Dorsolateral prefrontal cortex (tissue), 120 donors: ENCODE measurements at regions of chr4 and their contacts with region 1.

Region 1: DNA sequence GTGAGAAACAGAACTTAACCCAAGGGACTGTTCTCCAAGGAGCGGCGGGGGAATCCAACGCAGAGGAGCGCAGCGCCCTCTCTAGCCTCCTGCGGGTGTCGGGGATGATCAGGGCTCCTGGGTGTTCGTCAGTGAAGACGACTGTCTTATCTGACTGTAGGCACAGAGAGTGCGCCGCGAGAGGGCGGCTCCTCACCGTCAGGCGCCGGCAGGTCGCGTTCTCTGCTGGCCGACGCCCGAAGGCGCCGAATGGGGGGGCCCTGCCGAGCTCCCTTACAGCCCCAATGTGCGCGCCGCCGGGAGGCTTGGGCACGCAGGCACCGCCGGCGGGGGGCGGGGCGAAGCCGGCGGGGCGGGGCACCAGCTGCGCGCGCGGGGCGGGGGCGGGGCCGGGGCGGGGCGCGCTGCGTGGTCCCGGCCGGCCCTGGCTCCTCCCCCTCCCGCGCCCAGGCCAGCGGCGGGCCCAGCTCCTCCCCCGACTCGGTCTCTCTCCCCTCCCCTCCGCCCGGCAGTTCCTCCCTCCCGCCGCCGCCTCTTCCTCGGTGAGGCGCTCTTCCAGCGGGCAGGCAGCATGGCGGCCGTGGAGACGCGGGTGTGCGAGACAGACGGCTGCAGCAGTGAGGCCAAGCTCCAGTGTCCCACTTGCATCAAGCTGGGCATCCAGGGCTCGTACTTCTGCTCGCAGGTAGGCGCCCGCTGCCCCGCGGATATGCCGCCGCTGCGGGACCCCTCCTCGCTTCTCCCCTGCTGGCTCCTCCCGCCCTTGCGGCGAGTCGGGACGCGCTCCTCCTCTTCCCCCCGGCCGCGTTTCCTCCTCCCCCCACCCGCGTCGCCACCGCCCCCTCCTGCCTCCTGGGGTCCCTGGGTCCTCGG is at the start of gene METAP1:
- DNase-seq: peak; percentile 74 to 93 (median 89)
- H3K4me3 ChIP-seq: peak within 1 kb of the TSS; percentile 64 to 99 (median 95)
- H3K27ac ChIP-seq: peak within 1 kb of the TSS; percentile 54 to 95 (median 89)
- H3K27me3 ChIP-seq: no peaks in the 10 kb centered on the region
- CTCF ChIP-seq: peak; percentile 36 to 86 (median 69)
- total RNA-seq, gene METAP1: 18.4 to 48.4 (median 31.7) TPM

Region 2: GRCh38 chr4:98260579-98261290 is 734.7 kb before region 1 on chr4:
- intact Hi-C with region 1: loop called (anchors 2 to 5 kb)
- DNase-seq: peak; percentile 84 to 96 (median 92)
- H3K4me3 ChIP-seq: peak overlapping the region; percentile 67 to 96 (median 88)
- H3K27ac ChIP-seq: peak overlapping the region; percentile 89 to 99 (median 98)
- H3K27me3 ChIP-seq: no peaks in the 10 kb centered on the region
- CTCF ChIP-seq: peak in 12 of 56 donors; percentile 1 to 19 (median 10)

Region 3: GRCh38 chr4:98786866-98787265 is 208.6 kb before region 1 on chr4:
- intact Hi-C with region 1: loop called in 1 of 2 experiments (anchors 10 kb)
- DNase-seq: no peak
- H3K4me3 ChIP-seq: peak overlapping the region in 3 of 59 donors; percentile 6 to 45 (median 43)
- H3K27ac ChIP-seq: no peak overlapping the region
- H3K27me3 ChIP-seq: no peaks in the 10 kb centered on the region
- CTCF ChIP-seq: peak in 47 of 56 donors; percentile 13 to 69 (median 40)

Region 4: GRCh38 chr4:99054428-99054994 is 59.1 kb after region 1 on chr4:
- intact Hi-C with region 1: loop called (anchors 2 to 5 kb)
- DNase-seq: no peak
- H3K4me3 ChIP-seq: no peak overlapping the region
- H3K27ac ChIP-seq: peak overlapping the region in 6 of 59 donors; percentile 4 to 42 (median 22)
- H3K27me3 ChIP-seq: no peaks in the 10 kb centered on the region
- CTCF ChIP-seq: no peak

Region 5: DNA sequence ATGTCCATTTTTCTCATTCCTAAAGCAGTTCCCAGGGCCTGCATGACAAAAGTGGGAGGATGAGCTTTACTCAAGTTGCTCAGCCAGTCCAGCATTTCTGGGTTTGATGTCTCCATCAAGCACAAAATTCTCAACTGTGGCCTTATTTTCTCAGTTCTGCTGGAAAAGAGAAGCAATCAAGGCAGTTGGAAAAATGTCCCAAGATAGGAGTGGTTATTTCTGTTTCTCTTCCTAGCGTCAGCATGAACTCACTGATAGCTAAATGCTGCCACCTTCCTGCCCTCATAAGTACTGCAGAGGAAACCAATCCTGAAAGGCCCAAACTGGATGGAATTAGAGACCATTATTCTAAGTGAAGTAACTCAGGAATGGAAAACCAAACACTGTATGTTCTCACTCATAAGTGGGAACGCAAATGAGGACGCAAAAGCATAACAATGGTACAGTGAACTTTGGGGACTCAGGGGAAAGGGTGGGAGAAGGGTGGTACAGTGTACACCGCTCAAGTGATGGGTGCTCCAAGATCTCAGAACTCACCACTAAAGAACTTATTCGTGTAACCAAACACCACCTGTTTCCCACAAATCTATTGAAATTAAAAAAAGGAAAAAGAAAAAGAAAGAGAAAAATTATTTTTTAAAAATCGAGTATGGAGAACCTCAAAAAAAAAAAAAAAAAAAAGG is 410.2 kb after region 1 on chr4:
- intact Hi-C with region 1: loop called in 1 of 2 experiments (anchors 10 kb)
- DNase-seq: peak in 8 of 10 donors; percentile 29 to 75 (median 50)
- H3K4me3 ChIP-seq: no peak overlapping the region
- H3K27ac ChIP-seq: peak overlapping the region in 19 of 59 donors; percentile 5 to 63 (median 29)
- H3K27me3 ChIP-seq: no peaks in the 10 kb centered on the region
- CTCF ChIP-seq: peak; percentile 72 to 97 (median 92)